Lower lobe of right lung (tissue), 2 donors: ENCODE measurements at regions of chr3 and their contacts with region 1.

Region 1: GRCh38 chr3:36700537-36701248 is 63.7 kb downstream of the DCLK3 start:
- DNase-seq: peak; percentile 58
- ATAC-seq: peak; percentile 78 to 79
- H3K4me3 ChIP-seq: no peak overlapping the region
- H3K27ac ChIP-seq: no peak overlapping the region
- H3K4me1 ChIP-seq: no peaks in the 10 kb centered on the region
- H3K27me3 ChIP-seq: no peaks in the 10 kb centered on the region
- CTCF ChIP-seq: peak; percentile 85

Region 2: DNA sequence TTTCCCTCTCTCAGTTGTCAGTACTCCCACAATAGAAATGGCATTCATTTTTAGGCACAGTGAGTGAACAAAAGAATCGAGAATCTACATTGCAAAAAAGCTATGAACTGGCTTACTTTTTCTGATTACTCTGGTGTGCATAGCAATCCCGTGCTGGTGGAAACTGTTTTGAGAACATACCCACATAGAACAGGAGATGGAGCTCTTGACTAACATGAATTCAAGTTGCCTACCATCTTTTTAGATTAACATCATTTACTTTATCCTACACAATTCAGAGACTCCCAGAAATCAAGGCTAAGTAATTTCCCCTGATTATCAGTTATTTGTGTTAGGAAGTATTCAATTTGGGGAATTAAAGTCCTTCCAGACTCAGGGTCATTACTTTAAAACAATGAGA is 734.8 kb before region 1 on chr3:
- intact Hi-C with region 1: loop called (anchors 10 kb)
- DNase-seq: no peak
- ATAC-seq: no peak
- H3K4me3 ChIP-seq: no peak overlapping the region
- H3K27ac ChIP-seq: no peak overlapping the region
- H3K4me1 ChIP-seq: peaks cover 10% of the 10 kb centered on the region
- H3K27me3 ChIP-seq: no peaks in the 10 kb centered on the region
- CTCF ChIP-seq: peak; percentile 56

Region 3: GRCh38 chr3:36525115-36525801 is 175.4 kb before region 1 on chr3:
- intact Hi-C with region 1: no loop called
- DNase-seq: no peak
- ATAC-seq: no peak
- H3K4me3 ChIP-seq: no peak overlapping the region
- H3K27ac ChIP-seq: no peak overlapping the region
- H3K4me1 ChIP-seq: no peaks in the 10 kb centered on the region
- H3K27me3 ChIP-seq: no peaks in the 10 kb centered on the region
- CTCF ChIP-seq: no peak

Region 4: DNA sequence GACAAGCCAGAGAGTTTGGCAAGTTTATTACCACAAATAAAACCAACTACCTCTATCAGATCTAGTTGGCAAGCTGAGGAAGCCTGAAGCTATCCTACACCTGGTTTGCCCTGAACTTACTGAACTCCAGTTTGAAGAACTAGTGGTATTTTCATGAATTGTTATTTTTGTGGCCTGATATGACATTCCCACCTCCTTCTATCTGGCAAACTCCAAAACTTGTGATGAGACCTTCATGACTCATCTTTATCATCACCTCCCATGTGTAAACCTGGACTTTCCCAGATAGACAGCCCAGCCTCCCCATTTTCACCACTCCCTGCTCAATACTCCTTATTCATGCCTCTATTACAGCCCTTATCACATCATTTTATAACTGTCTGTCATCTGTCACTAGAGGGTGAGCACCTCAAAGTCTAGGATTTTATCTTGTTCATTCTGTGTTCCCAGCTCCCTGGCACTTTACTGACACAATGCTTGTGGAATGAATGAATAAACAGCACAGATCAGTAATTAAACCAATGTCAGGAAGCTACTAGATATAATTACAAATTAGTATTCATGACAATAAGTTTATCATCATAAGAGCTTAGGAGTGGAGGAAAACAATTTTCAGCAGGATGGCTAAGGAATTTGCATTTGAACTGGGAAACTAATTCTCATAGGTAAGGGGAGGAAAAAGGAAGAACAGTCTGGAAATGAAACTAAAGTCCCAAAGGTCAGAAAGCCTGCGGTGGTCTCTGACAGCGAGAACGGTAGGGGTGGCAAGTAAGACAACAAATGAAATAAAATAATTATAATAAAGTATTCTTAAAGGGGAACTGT is 257.4 kb after region 1 on chr3:
- intact Hi-C with region 1: no loop called
- DNase-seq: no peak
- ATAC-seq: peak in 1 of 2 donors; percentile 22
- H3K4me3 ChIP-seq: no peak overlapping the region
- H3K27ac ChIP-seq: no peak overlapping the region
- H3K4me1 ChIP-seq: peaks cover 16% of the 10 kb centered on the region
- H3K27me3 ChIP-seq: no peaks in the 10 kb centered on the region
- CTCF ChIP-seq: no peak